AG04450 (cell line): ENCODE measurements at regions of chr17 and their contacts with region 1.

Region 1: GRCh38 chr17:56715613-56716357 is 117.9 kb downstream of the C17orf67 start:
- DNase-seq: peak; percentile 62
- H3K4me3 ChIP-seq: no peak overlapping the region
- H3K27ac ChIP-seq: no peak overlapping the region
- H3K27me3 ChIP-seq: no peaks in the 10 kb centered on the region
- CTCF ChIP-seq: peak; percentile 83

Region 2: GRCh38 chr17:56416682-56417351 is 299.0 kb before region 1 on chr17:
- CTCF ChIA-PET with region 1: interaction called, 17 read pairs
- POLR2A ChIA-PET with region 1: no interaction called
- DNase-seq: no peak
- H3K4me3 ChIP-seq: no peak overlapping the region
- H3K27ac ChIP-seq: no peak overlapping the region
- H3K27me3 ChIP-seq: no peaks in the 10 kb centered on the region
- CTCF ChIP-seq: no peak

Region 3: GRCh38 chr17:56587298-56587946 is 128.4 kb before region 1 on chr17:
- CTCF ChIA-PET with region 1: interaction called, 272 read pairs
- POLR2A ChIA-PET with region 1: interaction called, 14 read pairs
- DNase-seq: no peak
- H3K4me3 ChIP-seq: no peak overlapping the region
- H3K27ac ChIP-seq: no peak overlapping the region
- H3K27me3 ChIP-seq: peaks cover 42% of the 10 kb centered on the region
- CTCF ChIP-seq: no peak

Region 4: DNA sequence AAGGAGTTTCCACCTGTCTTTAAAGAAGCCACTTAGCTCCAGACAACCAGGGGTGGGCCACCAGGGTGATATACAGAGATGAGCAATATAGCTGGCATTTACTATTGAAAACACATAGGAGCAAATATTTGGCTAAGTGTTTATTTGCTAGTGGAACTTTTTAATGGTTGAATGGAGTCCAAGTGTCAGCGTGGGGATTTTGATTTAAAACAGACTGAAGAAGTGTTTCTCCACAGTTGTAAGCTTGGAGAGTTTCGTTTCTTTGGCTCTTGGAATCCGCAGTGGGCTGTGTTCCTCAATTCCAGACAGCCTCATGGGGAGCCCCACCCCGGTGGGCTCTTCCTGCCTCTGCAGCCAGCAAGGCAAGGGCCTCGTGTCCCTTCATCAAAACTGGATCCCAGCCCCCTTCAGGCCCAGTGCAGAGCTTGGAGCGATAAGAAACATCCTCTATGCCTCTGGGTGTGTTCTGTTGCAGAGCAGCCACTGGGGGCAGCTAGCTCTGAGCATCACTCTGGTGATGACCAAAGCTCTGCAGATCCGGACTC is 86.2 kb before region 1 on chr17:
- CTCF ChIA-PET with region 1: interaction called, 10 read pairs
- POLR2A ChIA-PET with region 1: no interaction called
- DNase-seq: peak; percentile 7
- H3K4me3 ChIP-seq: no peak overlapping the region
- H3K27ac ChIP-seq: no peak overlapping the region
- H3K27me3 ChIP-seq: no peaks in the 10 kb centered on the region
- CTCF ChIP-seq: peak; percentile 61

Region 5: GRCh38 chr17:56737366-56738161 is 21.8 kb after region 1 on chr17:
- CTCF ChIA-PET with region 1: interaction called, 29 read pairs
- POLR2A ChIA-PET with region 1: interaction called, 3 read pairs
- DNase-seq: peak; percentile 58
- H3K4me3 ChIP-seq: no peak overlapping the region
- H3K27ac ChIP-seq: peak overlapping the region; percentile 21
- H3K27me3 ChIP-seq: peaks cover 11% of the 10 kb centered on the region
- CTCF ChIP-seq: no peak

Region 6: DNA sequence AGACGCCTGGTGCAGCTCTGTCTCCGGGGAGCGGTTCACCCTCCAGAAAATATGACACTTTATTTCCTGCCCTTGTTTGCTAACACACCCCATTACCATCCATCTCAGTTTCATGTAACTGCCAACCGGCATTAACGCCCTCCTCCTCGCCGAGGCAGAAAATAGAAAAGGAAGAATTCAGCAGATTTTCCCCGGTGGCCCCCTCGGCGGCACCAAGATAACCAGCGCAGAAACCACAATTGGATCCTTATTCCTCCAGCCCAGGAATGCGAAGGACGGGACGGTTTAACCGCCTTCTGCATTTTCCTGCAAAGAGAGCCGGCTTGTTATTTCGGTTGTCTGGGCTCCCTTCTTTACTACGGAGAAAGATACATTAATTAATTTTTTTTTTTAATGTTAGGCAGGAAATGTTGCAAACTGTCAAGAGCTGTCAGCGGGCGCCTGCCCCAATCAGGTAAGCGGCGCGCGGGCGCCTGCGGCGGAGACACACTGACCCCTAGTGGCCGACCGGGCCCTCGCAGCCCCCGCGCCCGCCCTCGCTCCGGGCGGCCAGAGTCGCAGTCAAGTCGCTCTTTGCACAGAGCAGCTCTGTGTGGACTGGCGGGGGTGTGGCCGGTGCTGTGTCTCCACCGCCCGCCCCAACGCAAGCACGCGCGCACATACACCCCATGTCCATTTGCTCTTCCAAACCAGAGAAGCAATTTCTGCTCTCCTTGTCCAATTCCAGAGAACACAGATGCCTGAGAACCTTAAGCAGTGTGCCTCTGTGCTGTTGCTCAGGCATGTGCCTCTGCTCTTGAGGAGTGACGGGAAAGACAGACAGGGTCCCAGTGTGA is 64.3 kb after region 1 on chr17:
- CTCF ChIA-PET with region 1: interaction called, 45 read pairs
- POLR2A ChIA-PET with region 1: no interaction called
- DNase-seq: peak; percentile 13
- H3K4me3 ChIP-seq: peak overlapping the region; percentile 51
- H3K27ac ChIP-seq: no peak overlapping the region
- H3K27me3 ChIP-seq: no peaks in the 10 kb centered on the region
- CTCF ChIP-seq: peak; percentile 91

Region 7: GRCh38 chr17:56918916-56919639 is 203.3 kb after region 1 on chr17:
- CTCF ChIA-PET with region 1: no interaction called
- POLR2A ChIA-PET with region 1: no interaction called
- DNase-seq: no peak
- H3K4me3 ChIP-seq: no peak overlapping the region
- H3K27ac ChIP-seq: no peak overlapping the region
- H3K27me3 ChIP-seq: no peaks in the 10 kb centered on the region
- CTCF ChIP-seq: no peak